GM12878 (cell line): ENCODE measurements at regions of chr11 and their contacts with region 1.

Region 1: DNA sequence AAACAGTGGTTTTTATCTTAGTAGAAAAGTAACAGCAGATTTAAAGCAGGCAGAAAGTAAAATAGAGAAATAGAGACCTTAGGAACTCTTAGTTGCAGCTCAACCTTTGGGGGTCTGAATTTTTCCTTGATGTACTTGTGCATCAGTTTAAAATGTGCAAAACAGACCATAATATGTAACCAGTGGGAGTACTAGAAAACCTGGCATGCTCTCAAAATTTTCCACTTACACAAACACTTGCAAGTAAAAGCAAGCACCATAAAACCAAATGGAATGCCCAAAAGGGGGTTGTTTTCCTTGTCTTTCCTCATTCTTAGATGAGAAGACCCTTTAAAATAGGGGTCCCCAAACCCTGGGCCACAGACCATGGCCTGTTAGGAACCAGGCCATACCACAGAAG is 12.9 kb upstream of the MRGPRE start:
- DNase-seq: no peak
- ATAC-seq: no peak
- H3K4me3 ChIP-seq: no peak overlapping the region
- H3K27ac ChIP-seq: no peak overlapping the region
- H3K4me1 ChIP-seq: no peaks in the 10 kb centered on the region
- H3K27me3 ChIP-seq: no peaks in the 10 kb centered on the region
- CTCF ChIP-seq: no peak
- EP300 ChIP-seq: no peak
- POLR2A ChIP-seq: no peak
- RAD21 ChIP-seq: no peak

Region 2: DNA sequence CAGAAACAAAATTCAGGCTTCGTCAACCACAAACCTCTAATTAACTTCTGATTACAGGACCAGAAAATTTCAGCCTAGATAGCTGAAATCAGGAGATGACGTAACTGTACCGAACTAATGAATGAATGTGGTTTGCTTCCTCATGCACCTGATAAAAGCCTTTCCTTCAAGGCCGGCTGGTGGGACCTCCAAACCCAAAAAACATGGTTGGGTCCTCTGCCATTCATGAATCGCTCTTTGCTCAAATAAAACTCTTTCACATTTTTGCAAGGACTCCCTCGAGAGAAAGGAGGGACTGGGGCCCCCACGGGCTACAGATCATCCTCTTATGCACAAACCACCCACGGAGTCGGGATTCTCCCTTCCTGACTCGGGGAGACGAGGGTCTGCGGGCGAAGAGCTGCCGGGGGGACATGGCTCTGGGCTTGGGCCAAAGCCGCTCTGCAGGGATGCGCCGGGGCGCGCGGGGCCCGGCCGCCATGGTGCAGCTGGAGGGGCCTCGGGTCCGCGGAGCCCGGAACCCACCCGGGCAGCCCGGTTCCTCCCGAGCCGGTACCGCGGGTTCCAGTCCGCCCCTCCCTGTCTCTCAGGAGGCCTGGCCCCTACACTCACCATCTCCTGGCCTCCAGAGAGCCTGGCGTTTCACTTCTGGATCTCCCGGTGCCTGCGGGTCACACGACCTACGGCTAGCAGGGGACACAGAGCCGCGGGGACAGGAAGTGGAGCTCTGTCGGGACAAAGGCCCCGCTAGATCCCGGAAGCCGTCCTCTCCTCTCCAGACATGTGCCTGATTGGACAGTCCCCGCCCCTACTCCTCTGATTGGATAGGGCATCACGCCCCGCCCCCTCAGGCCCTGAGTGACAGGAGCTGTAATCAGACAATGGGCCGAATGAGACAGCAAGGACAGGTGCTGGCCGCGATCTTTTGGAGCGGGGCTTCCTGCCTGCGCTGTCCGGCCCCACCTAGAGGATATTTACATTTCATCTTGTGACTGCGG is 133.7 kb after region 1 on chr11 and contains the start of gene ZNF195:
- CTCF ChIA-PET with region 1: no interaction called
- POLR2A ChIA-PET with region 1: no interaction called
- RAD21 ChIA-PET with region 1: no interaction called
- SMC1A ChIA-PET with region 1: interaction called, 3 read pairs
- in situ Hi-C with region 1: loop called (anchors 10 kb)
- intact Hi-C with region 1: no loop called
- DNase-seq: peak; percentile 94
- ATAC-seq: peak; percentile 99
- H3K4me3 ChIP-seq: peak within 1 kb of the TSS; percentile 81
- H3K27ac ChIP-seq: peak within 1 kb of the TSS; percentile 88
- H3K4me1 ChIP-seq: 0 out of 2 replicates have a peak, but pooled peaks cover 9% of the 10 kb centered on the region
- H3K27me3 ChIP-seq: no peaks in the 10 kb centered on the region
- CTCF ChIP-seq: no peak
- EP300 ChIP-seq: 0 out of 4 replicates have a peak, but pooled peaks of 1 of the 2 experiments have one; percentile 21
- POLR2A ChIP-seq: peak; percentile 92
- RAD21 ChIP-seq: no peak
- polyA plus RNA-seq, gene ZNF195: 37.3 to 41.6 TPM